ENCODE measurements at regions of chr1 and their contacts with region 1.

Region 1: DNA sequence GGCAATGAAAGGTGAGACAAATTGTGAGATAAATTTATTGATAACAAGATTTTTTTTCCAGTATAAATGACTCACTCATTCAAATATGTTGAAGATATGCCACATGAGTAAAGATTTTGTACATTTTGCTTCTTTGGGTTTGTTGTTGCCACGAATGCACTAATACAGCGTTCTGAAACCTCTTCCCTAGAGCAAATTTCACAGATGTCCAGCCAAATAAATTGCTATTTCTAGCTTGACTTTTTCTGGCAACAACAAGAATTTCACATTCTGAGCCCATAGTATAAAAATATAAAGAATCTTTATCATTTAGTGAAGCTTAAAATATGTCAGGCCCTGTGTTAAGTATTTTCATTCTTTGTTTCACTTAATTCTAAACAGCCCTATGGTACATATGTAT is 114.5 kb upstream of the COL24A1 start:
- DNase-seq: no peak
- ATAC-seq: no peak
- H3K4me3 ChIP-seq: no peak overlapping the region
- H3K27ac ChIP-seq: no peak overlapping the region
- H3K4me1 ChIP-seq: no peaks in the 10 kb centered on the region
- H3K27me3 ChIP-seq: no peaks in the 10 kb centered on the region
- CTCF ChIP-seq: no peak

Region 2: DNA sequence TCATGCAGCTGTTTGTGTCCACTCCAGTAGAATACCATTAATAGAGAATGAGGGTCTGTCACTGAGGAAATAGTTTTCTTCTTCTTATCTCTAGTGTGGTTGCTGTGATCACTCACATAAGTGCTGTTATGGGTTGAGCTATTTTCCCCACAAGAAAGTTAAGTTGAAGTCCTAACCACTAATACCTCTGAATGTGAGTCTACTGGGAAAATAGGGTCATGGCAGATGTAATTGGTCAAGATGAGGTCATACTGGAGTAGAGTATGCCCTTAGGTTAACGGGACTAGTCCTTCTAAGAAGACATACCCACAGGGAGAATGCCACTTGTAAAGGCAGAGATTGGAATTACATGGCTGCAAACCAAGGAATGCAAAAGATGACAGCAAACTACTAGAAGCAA is 44.0 kb before region 1 on chr1:
- intact Hi-C with region 1: no loop called
- DNase-seq: no peak
- ATAC-seq: no peak
- H3K4me3 ChIP-seq: no peak overlapping the region
- H3K27ac ChIP-seq: no peak overlapping the region
- H3K4me1 ChIP-seq: no peaks in the 10 kb centered on the region
- H3K27me3 ChIP-seq: no peaks in the 10 kb centered on the region
- CTCF ChIP-seq: no peak

Region 3: GRCh38 chr1:86296305-86297205 is 25.5 kb after region 1 on chr1:
- intact Hi-C with region 1: loop called in 1 of 10 experiments (anchors 1 kb)
- DNase-seq: no peak
- ATAC-seq: no peak
- H3K4me3 ChIP-seq: no peak overlapping the region
- H3K27ac ChIP-seq: no peak overlapping the region
- H3K4me1 ChIP-seq: peaks cover 0 to 4% (median 0%) of the 10 kb centered on the region in 9 donors
- H3K27me3 ChIP-seq: no peaks in the 10 kb centered on the region
- CTCF ChIP-seq: no peak

Measured in heart right ventricle (tissue), 16 donors.